Endothelial cell of umbilical vein (primary cell): ENCODE measurements at regions of chr19 and their contacts with region 1.

Region 1: GRCh38 chr19:48445606-48446481 is at the start of gene GRWD1:
- DNase-seq: peak; percentile 97
- H3K4me3 ChIP-seq: peak within 1 kb of the TSS; percentile 85 to 97 (median 86)
- H3K27ac ChIP-seq: peak within 1 kb of the TSS; percentile 52
- H3K4me1 ChIP-seq: peaks cover 17% of the 10 kb centered on the region
- H3K27me3 ChIP-seq: peaks cover 7 to 19% of the 10 kb centered on the region in 2 experiments
- CTCF ChIP-seq: no peak
- POLR2A ChIP-seq: peak; percentile 71
- total RNA-seq, gene GRWD1: 52.7 and 52.8 TPM in 2 replicates

Region 2: DNA sequence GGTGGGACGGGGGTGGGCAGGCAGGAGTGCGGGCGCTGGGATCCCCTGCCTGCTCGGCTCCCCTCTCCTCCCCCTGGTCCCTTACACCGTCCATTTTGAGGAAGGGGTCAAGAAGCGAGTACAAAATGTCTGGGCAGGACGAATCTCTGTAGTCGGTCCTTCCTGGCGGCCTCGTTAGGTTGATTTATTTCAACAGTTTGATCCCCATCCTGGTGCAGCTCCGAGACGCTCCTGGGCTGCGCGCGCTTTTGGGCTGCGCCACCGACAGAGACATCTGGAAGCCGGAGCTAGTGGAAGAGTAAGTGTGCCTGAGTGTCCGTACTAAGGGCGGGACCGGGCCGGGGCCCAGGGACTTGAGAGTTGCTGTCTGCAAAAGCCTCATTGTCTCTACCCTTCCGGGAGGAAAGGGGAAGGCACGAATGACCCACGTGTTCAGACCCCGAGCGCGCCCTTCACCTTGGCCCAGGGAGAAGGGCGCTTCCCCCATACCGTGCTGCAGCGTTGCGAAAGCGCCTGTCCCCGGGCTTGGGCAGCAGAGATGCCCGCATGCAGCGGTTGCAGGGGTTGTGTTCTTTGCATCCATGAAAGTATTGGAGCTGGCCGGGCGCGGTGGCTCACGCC is 174.2 kb before region 1 on chr19:
- CTCF ChIA-PET with region 1: no interaction called
- POLR2A ChIA-PET with region 1: no interaction called
- dilution Hi-C with region 1: no loop called
- intact Hi-C with region 1: loop called (anchors 5 kb)
- DNase-seq: peak; percentile 31
- H3K4me3 ChIP-seq: peak overlapping the region; percentile 23 to 53 (median 30)
- H3K27ac ChIP-seq: no peak overlapping the region
- H3K4me1 ChIP-seq: peaks cover 5% of the 10 kb centered on the region
- H3K27me3 ChIP-seq: no peaks in the 10 kb centered on the region
- CTCF ChIP-seq: no peak
- POLR2A ChIP-seq: no peak

Region 3: GRCh38 chr19:48292798-48293197 is 153.0 kb before region 1 on chr19:
- CTCF ChIA-PET with region 1: no interaction called
- POLR2A ChIA-PET with region 1: no interaction called
- dilution Hi-C with region 1: no loop called
- intact Hi-C with region 1: no loop called
- DNase-seq: no peak
- H3K4me3 ChIP-seq: no peak overlapping the region
- H3K27ac ChIP-seq: no peak overlapping the region
- H3K4me1 ChIP-seq: peaks cover 9% of the 10 kb centered on the region
- H3K27me3 ChIP-seq: no peaks in the 10 kb centered on the region
- CTCF ChIP-seq: no peak
- POLR2A ChIP-seq: no peak

Region 4: GRCh38 chr19:48351341-48351752 is 94.5 kb before region 1 on chr19:
- CTCF ChIA-PET with region 1: interaction called, 14 read pairs
- POLR2A ChIA-PET with region 1: no interaction called
- dilution Hi-C with region 1: no loop called
- intact Hi-C with region 1: no loop called
- DNase-seq: peak; percentile 57
- H3K4me3 ChIP-seq: no peak overlapping the region
- H3K27ac ChIP-seq: no peak overlapping the region
- H3K4me1 ChIP-seq: no peaks in the 10 kb centered on the region
- H3K27me3 ChIP-seq: no peaks in the 10 kb centered on the region
- CTCF ChIP-seq: peak; percentile 82 to 90
- POLR2A ChIP-seq: no peak

Region 5: DNA sequence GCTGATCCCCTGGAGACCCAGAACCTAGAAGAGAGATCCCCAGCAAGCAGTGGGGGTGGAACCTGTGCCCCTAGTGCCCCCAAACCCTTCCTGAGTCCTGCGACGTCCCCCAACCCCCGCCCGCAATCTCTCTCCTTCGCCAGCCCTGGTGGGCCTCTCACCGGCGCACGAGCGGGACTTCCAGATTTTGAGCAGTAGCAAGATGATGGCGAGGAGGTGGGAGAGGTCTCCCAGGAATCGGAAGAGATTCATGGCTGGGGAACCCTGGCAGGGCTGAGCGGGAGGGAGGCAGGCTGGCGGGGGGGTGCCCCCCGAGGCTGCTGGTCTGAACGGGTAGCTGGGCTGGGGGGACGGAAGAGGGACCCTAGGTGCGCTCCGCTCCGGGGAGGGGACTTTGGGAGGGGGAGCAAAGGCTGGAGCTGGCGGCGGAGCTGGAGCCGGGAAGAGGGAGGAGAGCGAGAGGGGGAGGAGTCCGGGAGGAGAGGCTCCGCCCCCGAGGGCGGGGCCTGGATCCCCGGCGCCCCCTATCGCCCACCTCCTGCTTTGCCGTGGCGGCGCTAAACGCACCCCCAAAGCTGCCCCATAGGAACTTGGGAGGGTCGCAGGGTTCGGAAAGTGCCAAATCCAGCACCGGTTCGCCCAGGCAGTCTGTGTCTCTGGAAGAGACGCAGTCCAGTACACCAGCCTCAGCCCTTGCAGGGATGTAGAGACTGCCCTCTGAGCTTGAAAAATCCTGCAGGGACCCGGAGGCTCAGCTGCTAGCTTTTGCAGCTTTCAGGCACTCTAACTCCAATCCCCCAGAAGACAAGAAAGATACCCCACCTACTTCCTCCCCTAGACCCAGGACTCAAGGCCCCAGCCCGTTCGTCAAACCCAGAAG is 54.5 kb before region 1 on chr19 and contains the start of gene KDELR1:
- CTCF ChIA-PET with region 1: interaction called, 52 read pairs
- POLR2A ChIA-PET with region 1: no interaction called
- dilution Hi-C with region 1: no loop called
- intact Hi-C with region 1: loop called (anchors 1 kb)
- DNase-seq: peak; percentile 75
- H3K4me3 ChIP-seq: peak within 1 kb of the TSS; percentile 76 to 99 (median 83)
- H3K27ac ChIP-seq: peak within 1 kb of the TSS; percentile 65
- H3K4me1 ChIP-seq: peaks cover 3% of the 10 kb centered on the region
- H3K27me3 ChIP-seq: peaks cover 16 to 33% of the 10 kb centered on the region in 2 experiments
- CTCF ChIP-seq: peak; percentile 94 to 99
- POLR2A ChIP-seq: peak; percentile 77
- total RNA-seq, gene KDELR1: 199 and 200 TPM in 2 replicates

Region 6: DNA sequence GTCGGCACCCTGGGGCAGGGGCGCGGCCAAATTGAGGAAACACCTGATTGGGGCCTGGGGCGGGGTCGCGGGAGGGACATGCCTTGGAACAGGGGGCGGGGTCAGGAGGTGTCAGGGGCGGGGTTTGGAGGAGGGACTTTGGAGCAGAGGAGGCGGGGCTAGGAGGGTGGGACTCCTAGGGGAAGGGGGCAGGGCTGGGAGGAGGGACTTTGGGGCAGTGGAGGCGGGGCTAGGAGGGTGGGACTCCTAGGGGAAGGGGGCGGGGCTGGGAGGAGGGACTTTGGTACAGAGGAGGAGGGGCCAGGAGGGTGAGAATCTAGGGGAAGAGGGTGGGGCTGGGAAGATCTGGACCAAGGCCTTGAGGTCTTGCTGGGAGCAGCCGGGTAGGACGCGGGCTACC is 30.4 kb before region 1 on chr19:
- CTCF ChIA-PET with region 1: interaction called, 5 read pairs
- POLR2A ChIA-PET with region 1: no interaction called
- dilution Hi-C with region 1: no loop called
- intact Hi-C with region 1: loop called (anchors 1 kb)
- DNase-seq: peak; percentile 85
- H3K4me3 ChIP-seq: peak overlapping the region in 2 of 3 experiments; percentile 31 to 37
- H3K27ac ChIP-seq: no peak overlapping the region
- H3K4me1 ChIP-seq: peaks cover 6% of the 10 kb centered on the region
- H3K27me3 ChIP-seq: no peaks in the 10 kb centered on the region
- CTCF ChIP-seq: no peak
- POLR2A ChIP-seq: no peak

Region 7: DNA sequence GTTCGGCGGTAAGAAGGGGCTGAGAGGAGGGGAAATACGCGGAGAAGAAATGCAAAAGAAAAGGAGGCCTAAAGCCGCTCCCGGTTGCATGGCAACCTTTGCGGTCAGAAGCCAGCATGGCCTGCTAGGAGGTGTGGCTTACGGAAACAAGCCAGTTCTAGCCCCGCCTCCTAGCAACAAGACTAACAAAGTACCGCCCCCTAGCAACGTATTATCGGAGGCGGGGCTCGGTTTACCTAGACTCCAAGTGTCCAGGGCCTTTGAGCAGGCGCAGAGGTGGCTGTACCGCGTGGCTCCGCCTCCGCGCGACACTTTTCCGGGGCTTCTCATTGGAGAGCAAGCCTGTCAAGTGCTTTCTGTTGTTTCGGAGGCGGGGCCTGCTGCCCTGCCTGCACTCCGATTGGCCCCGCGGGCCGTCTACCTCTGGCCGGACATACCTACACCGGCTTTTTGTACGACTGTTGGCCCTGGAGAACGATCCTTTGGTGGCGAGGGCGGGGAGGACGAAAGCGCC is 23.0 kb after region 1 on chr19:
- CTCF ChIA-PET with region 1: interaction called, 3 read pairs
- POLR2A ChIA-PET with region 1: interaction called, 3 read pairs
- dilution Hi-C with region 1: no loop called
- intact Hi-C with region 1: loop called (anchors 2 kb)
- DNase-seq: peak; percentile 100
- H3K4me3 ChIP-seq: peak overlapping the region; percentile 49 to 85 (median 74)
- H3K27ac ChIP-seq: peak overlapping the region; percentile 94
- H3K4me1 ChIP-seq: peaks cover 8% of the 10 kb centered on the region
- H3K27me3 ChIP-seq: no peaks in the 10 kb centered on the region
- CTCF ChIP-seq: no peak
- POLR2A ChIP-seq: no peak